Activated CD4-positive, alpha-beta memory T cell treated with anti-CD3 and anti-CD28 coated beads for 36 hours (primary cell): ENCODE measurements at regions of chr2 and their contacts with region 1.

Region 1: GRCh38 chr2:30165050-30165520 is 18.3 kb downstream of the YPEL5 start:
- DNase-seq: peak; percentile 73
- H3K4me3 Mint-ChIP-seq: no peak overlapping the region
- H3K27ac Mint-ChIP-seq: no peak overlapping the region
- H3K4me1 Mint-ChIP-seq: peaks cover 7% of the 10 kb centered on the region
- H3K27me3 Mint-ChIP-seq: no peaks in the 10 kb centered on the region

Region 2: GRCh38 chr2:30139131-30139870 is 25.8 kb before region 1 on chr2:
- CTCF ChIA-PET with region 1: interaction called, 11 read pairs
- POLR2A ChIA-PET with region 1: no interaction called
- intact Hi-C with region 1: no loop called
- DNase-seq: peak; percentile 60
- H3K4me3 Mint-ChIP-seq: peak overlapping the region; percentile 43
- H3K27ac Mint-ChIP-seq: peak overlapping the region; percentile 77
- H3K4me1 Mint-ChIP-seq: peaks cover 20% of the 10 kb centered on the region
- H3K27me3 Mint-ChIP-seq: no peaks in the 10 kb centered on the region

Region 3: GRCh38 chr2:30178618-30179434 is 13.7 kb after region 1 on chr2:
- CTCF ChIA-PET with region 1: interaction called, 11 read pairs
- POLR2A ChIA-PET with region 1: no interaction called
- intact Hi-C with region 1: no loop called
- DNase-seq: no peak
- H3K4me3 Mint-ChIP-seq: no peak overlapping the region
- H3K27ac Mint-ChIP-seq: no peak overlapping the region
- H3K4me1 Mint-ChIP-seq: no peaks in the 10 kb centered on the region
- H3K27me3 Mint-ChIP-seq: no peaks in the 10 kb centered on the region

Region 4: DNA sequence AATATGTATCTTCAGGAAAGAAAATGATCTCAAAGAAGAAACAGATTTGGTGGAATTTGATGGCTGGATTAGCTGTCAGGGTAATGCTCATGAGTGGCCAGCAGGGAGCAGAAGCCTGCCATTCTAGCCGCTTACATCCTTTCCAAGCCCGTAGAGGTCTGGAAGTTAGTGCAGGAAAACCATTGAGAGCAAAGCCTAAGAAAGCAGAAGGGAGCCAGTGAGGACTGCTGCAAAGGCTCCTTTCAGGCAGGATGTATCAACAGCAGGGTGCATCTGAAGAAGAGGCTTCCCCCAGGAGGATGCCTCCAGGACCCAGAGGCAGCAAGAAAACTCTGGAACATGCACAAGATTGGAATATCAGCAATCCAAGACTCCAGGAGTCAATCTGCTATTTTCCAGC is 43.4 kb after region 1 on chr2:
- CTCF ChIA-PET with region 1: interaction called, 58 read pairs
- POLR2A ChIA-PET with region 1: no interaction called
- intact Hi-C with region 1: loop called (anchors 2 kb)
- DNase-seq: peak; percentile 56
- H3K4me3 Mint-ChIP-seq: no peak overlapping the region
- H3K27ac Mint-ChIP-seq: no peak overlapping the region
- H3K4me1 Mint-ChIP-seq: peaks cover 13% of the 10 kb centered on the region
- H3K27me3 Mint-ChIP-seq: no peaks in the 10 kb centered on the region

Region 5: DNA sequence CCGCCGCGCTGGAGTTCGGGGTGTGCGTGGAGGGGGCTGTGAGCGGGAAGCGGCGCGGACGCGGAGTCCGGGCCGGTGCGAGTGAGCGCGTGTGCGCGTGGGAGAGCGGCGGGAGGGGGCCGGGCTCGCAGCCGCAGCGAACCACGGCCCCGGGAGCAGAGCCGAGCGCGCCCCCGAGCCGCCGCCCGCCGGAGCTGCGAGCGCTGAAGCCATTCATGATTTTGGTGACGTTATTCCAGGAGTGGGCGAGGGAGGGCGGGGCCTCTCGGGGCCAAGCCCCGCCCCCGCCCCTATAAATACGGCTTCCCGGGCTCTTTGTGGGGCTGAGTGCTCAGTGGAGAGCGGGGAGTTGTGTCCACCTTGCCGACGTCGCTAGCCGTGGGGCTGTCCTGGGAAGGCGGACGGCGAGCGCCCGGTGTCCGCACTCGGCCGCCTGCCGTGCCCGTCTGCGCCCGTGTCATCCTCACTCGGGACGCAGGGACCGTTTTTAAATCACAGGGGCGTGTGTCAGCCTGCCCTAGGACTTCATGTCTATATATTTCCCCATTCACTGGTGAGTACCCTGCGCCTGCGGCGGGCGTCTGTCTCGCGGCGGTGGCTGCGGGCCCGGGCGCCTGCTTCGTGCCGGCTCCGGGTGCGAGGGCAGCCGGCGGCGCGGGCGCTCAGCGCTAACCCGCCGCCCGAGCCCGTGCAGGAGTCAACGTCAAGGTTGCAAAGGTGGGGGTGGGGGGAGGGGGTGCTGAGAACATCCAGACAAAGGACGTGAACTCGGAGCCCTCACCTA is 66.3 kb after region 1 on chr2 and contains the start of gene LBH:
- CTCF ChIA-PET with region 1: interaction called, 18 read pairs
- POLR2A ChIA-PET with region 1: interaction called, 3 read pairs
- intact Hi-C with region 1: loop called (anchors 2 kb)
- DNase-seq: peak; percentile 94
- H3K4me3 Mint-ChIP-seq: peak within 1 kb of the TSS; percentile 84
- H3K27ac Mint-ChIP-seq: peak within 1 kb of the TSS; percentile 94
- H3K4me1 Mint-ChIP-seq: peaks cover 63% of the 10 kb centered on the region
- H3K27me3 Mint-ChIP-seq: no peaks in the 10 kb centered on the region
- total RNA-seq, gene LBH: 109 to 112 TPM

Region 6: GRCh38 chr2:30336978-30337841 is 172.1 kb after region 1 on chr2:
- CTCF ChIA-PET with region 1: interaction called, 8 read pairs
- POLR2A ChIA-PET with region 1: no interaction called
- intact Hi-C with region 1: loop called (anchors 1 kb)
- DNase-seq: peak; percentile 83
- H3K4me3 Mint-ChIP-seq: peak overlapping the region; percentile 68
- H3K27ac Mint-ChIP-seq: peak overlapping the region; percentile 96
- H3K4me1 Mint-ChIP-seq: peaks cover 75% of the 10 kb centered on the region
- H3K27me3 Mint-ChIP-seq: no peaks in the 10 kb centered on the region

Region 7: GRCh38 chr2:30691948-30692828 is 527.1 kb after region 1 on chr2:
- CTCF ChIA-PET with region 1: interaction called, 19 read pairs
- POLR2A ChIA-PET with region 1: no interaction called
- intact Hi-C with region 1: no loop called
- DNase-seq: no peak
- H3K4me3 Mint-ChIP-seq: no peak overlapping the region
- H3K27ac Mint-ChIP-seq: no peak overlapping the region
- H3K4me1 Mint-ChIP-seq: no peaks in the 10 kb centered on the region
- H3K27me3 Mint-ChIP-seq: no peaks in the 10 kb centered on the region